Mammary epithelial cell (primary cell): ENCODE measurements at regions of chr2 and their contacts with region 1.

Region 1: GRCh38 chr2:39913648-39914461 is 134.8 kb upstream of the THUMPD2 start:
- DNase-seq: peak; percentile 58
- H3K4me3 ChIP-seq: no peak overlapping the region
- H3K27ac ChIP-seq: no peak overlapping the region
- H3K4me1 ChIP-seq: peaks cover 4% of the 10 kb centered on the region
- H3K27me3 ChIP-seq: no peaks in the 10 kb centered on the region
- CTCF ChIP-seq: peak; percentile 68 to 73

Region 2: DNA sequence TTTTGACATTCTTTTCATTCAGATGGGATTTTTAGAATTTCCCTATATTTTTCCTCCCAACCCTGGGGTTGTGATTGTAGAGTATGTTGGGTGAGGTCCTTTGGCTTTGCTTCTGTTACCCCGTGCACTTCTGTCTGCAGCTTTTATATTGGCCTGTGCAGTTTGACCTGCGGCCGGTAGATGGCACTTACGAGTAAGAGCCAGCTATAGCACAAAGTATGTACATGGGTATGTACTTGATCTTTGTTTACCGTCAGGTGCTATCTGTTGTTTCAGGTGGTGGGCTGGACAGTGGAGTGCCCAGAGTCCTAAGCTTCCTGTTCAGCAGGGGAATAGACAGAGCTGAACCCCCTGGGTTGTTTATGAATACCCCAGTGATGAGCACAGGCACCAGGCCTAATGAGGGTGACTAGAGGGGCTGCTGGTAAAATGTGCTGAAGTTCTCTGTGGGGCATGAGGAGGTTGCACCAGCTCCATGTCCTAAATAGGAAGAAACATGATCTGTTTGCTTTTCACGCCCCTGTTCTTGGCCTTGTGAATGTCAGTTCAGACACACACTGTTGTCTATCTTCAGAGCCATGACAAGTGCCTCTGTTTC is 75.9 kb before region 1 on chr2:
- CTCF ChIA-PET with region 1: interaction called, 7 read pairs
- dilution Hi-C with region 1: no loop called
- in situ Hi-C with region 1: no loop called
- intact Hi-C with region 1: loop called (anchors 1 kb)
- DNase-seq: peak; percentile 42
- H3K4me3 ChIP-seq: no peak overlapping the region
- H3K27ac ChIP-seq: no peak overlapping the region
- H3K4me1 ChIP-seq: no peaks in the 10 kb centered on the region
- H3K27me3 ChIP-seq: no peaks in the 10 kb centered on the region
- CTCF ChIP-seq: peak; percentile 94 to 98

Region 3: DNA sequence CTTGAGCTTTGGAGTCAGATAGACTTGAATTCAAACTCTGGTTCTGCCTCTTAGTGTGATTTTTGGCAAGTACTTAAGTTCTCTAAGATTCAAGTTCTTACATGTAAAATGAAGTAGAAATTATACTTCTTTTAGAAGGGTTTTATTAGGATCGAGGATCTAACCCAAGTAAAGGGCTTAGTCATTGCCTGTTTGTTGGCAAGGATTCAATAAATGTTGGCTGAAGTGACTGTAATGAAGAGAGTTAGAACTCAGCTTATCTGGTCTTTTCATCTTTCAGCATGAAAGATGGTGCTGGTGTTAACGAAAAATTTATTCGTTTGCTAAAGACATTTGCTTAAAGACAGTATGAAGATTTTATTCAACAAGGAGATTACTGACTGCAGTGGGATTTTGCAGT is 181.1 kb after region 1 on chr2:
- CTCF ChIA-PET with region 1: no interaction called
- dilution Hi-C with region 1: no loop called
- in situ Hi-C with region 1: no loop called
- intact Hi-C with region 1: loop called (anchors 5 kb)
- DNase-seq: peak; percentile 82
- H3K4me3 ChIP-seq: no peak overlapping the region
- H3K27ac ChIP-seq: peak overlapping the region; percentile 14
- H3K4me1 ChIP-seq: peaks cover 40% of the 10 kb centered on the region
- H3K27me3 ChIP-seq: no peaks in the 10 kb centered on the region
- CTCF ChIP-seq: no peak

Region 4: GRCh38 chr2:40230707-40231432 is 317.0 kb after region 1 on chr2:
- CTCF ChIA-PET with region 1: no interaction called
- dilution Hi-C with region 1: no loop called
- in situ Hi-C with region 1: no loop called
- intact Hi-C with region 1: no loop called
- DNase-seq: peak; percentile 12
- H3K4me3 ChIP-seq: no peak overlapping the region
- H3K27ac ChIP-seq: no peak overlapping the region
- H3K4me1 ChIP-seq: no peaks in the 10 kb centered on the region
- H3K27me3 ChIP-seq: no peaks in the 10 kb centered on the region
- CTCF ChIP-seq: peak in 1 of 2 donors; percentile 34

Region 5: GRCh38 chr2:40244675-40245074 is 330.8 kb after region 1 on chr2:
- CTCF ChIA-PET with region 1: interaction called, 36 read pairs
- dilution Hi-C with region 1: no loop called
- in situ Hi-C with region 1: no loop called
- intact Hi-C with region 1: loop called (anchors 2 kb)
- DNase-seq: peak; percentile 46
- H3K4me3 ChIP-seq: no peak overlapping the region
- H3K27ac ChIP-seq: no peak overlapping the region
- H3K4me1 ChIP-seq: peaks cover 8% of the 10 kb centered on the region
- H3K27me3 ChIP-seq: no peaks in the 10 kb centered on the region
- CTCF ChIP-seq: peak; percentile 51 to 80

Region 6: GRCh38 chr2:40448468-40449079 is 534.7 kb after region 1 on chr2:
- CTCF ChIA-PET with region 1: interaction called, 8 read pairs
- dilution Hi-C with region 1: no loop called
- in situ Hi-C with region 1: loop called in 1 of 2 experiments (anchors 25 kb)
- intact Hi-C with region 1: loop called (anchors 2 kb)
- DNase-seq: peak; percentile 21
- H3K4me3 ChIP-seq: no peak overlapping the region
- H3K27ac ChIP-seq: no peak overlapping the region
- H3K4me1 ChIP-seq: peaks cover 16% of the 10 kb centered on the region
- H3K27me3 ChIP-seq: no peaks in the 10 kb centered on the region
- CTCF ChIP-seq: peak; percentile 66 to 69

Region 7: DNA sequence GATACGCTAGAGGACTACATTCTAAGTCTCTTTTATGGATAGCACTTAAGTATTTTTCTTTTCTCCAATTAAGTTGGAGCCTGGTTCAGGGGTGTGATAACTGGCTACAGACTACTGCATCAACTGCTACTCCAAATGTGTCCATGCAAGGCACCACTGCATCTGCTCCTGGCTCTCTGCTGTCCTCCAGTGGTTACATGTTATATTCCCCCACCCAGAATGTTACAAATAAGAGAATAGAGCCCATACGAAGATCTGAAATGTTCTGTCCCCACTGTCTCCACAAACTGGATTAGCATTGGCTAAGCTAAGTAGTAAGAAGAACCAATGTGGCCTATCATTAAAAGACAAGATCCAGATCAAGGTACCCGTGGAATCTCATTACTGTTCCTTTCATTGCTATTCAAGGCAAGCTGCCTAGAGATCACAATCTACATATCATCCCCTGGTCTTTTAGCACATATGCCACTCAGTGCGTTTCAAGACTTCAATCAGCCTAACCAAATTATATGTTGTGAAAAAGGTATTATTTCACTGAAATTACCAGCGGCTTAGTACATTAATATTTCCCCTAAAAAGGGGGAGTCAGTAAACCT is 846.3 kb after region 1 on chr2:
- CTCF ChIA-PET with region 1: interaction called, 5 read pairs
- dilution Hi-C with region 1: no loop called
- in situ Hi-C with region 1: loop called (anchors 25 kb)
- intact Hi-C with region 1: loop called (anchors 1 kb)
- DNase-seq: peak; percentile 39
- H3K4me3 ChIP-seq: no peak overlapping the region
- H3K27ac ChIP-seq: no peak overlapping the region
- H3K4me1 ChIP-seq: peaks cover 7% of the 10 kb centered on the region
- H3K27me3 ChIP-seq: no peaks in the 10 kb centered on the region
- CTCF ChIP-seq: peak; percentile 97 to 99

Region 8: GRCh38 chr2:41782306-41783158 is 1868.7 kb after region 1 on chr2:
- CTCF ChIA-PET with region 1: no interaction called
- dilution Hi-C with region 1: no loop called
- in situ Hi-C with region 1: loop called in 1 of 2 experiments (anchors 25 kb)
- intact Hi-C with region 1: loop called (anchors 2 kb)
- DNase-seq: peak; percentile 20
- H3K4me3 ChIP-seq: no peak overlapping the region
- H3K27ac ChIP-seq: no peak overlapping the region
- H3K4me1 ChIP-seq: no peaks in the 10 kb centered on the region
- H3K27me3 ChIP-seq: no peaks in the 10 kb centered on the region
- CTCF ChIP-seq: peak; percentile 71 to 82